Tibial artery (tissue), 4 donors: ENCODE measurements at regions of chr5 and their contacts with region 1.

Region 1: GRCh38 chr5:135465391-135466122 is 13.4 kb upstream of the TIFAB start:
- DNase-seq: peak in 1 of 2 donors; percentile 50
- H3K4me3 ChIP-seq: no peak overlapping the region
- H3K27ac ChIP-seq: no peak overlapping the region
- H3K4me1 ChIP-seq: peaks cover 0 to 9% (median 6%) of the 10 kb centered on the region in 4 donors
- H3K27me3 ChIP-seq: peaks cover 0 to 40% of the 10 kb centered on the region in 2 donors
- CTCF ChIP-seq: no peak

Region 2: GRCh38 chr5:135551593-135552447 is 86.3 kb after region 1 on chr5:
- intact Hi-C with region 1: loop called (anchors 2 kb)
- DNase-seq: peak; percentile 76
- H3K4me3 ChIP-seq: no peak overlapping the region
- H3K27ac ChIP-seq: no peak overlapping the region
- H3K4me1 ChIP-seq: no peaks in the 10 kb centered on the region
- H3K27me3 ChIP-seq: peaks cover 0 to 60% of the 10 kb centered on the region in 2 donors
- CTCF ChIP-seq: peak; percentile 81 to 86